CD4-positive, alpha-beta T cell (primary cell): ENCODE measurements at regions of chr2 and their contacts with region 1.

Region 1: GRCh38 chr2:100113990-100114433 is 28.4 kb downstream of the AFF3 start:
- DNase-seq: peak in 2 of 14 experiments; percentile 11 to 29
- ATAC-seq: peak; percentile 48
- H3K4me3 ChIP-seq: no peak overlapping the region
- H3K4me3 Mint-ChIP-seq: peak overlapping the region; percentile 7
- H3K27ac ChIP-seq: peak overlapping the region; percentile 22 to 66
- H3K27ac Mint-ChIP-seq: peak overlapping the region; percentile 67
- H3K4me1 ChIP-seq: peaks cover 16% of the 10 kb centered on the region
- H3K4me1 Mint-ChIP-seq: peaks cover 30% of the 10 kb centered on the region
- H3K27me3 ChIP-seq: no peaks in the 10 kb centered on the region
- H3K27me3 Mint-ChIP-seq: no peaks in the 10 kb centered on the region
- CTCF ChIP-seq: no peak

Region 2: DNA sequence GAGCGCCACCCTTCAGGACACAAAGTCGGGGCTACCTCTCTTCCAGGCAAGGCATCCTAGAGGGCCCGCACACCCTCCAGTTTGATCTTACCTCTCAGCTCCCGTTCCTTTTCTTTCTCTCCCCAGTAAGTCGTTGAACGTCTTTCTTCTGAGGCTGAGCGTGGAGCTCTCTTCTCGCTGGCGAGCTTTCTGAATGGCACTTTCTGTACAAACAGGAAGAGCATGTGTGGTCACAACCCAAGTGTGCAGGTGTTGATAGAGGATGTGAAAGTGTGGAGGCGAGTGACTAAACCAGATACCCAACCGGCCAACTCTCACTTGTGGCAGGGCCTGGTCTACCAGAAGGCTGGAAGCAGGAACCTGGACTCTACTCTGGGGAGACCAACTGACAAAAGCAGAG is 28.4 kb after region 1 on chr2 and contains the start of gene AFF3:
- CTCF ChIA-PET with region 1: no interaction called
- POLR2A ChIA-PET with region 1: interaction called, 19 read pairs
- intact Hi-C with region 1: no loop called
- DNase-seq: peak in 13 of 14 experiments; percentile 9 to 60 (median 32)
- ATAC-seq: peak; percentile 72
- H3K4me3 ChIP-seq: peak within 1 kb of the TSS; percentile 57
- H3K4me3 Mint-ChIP-seq: peak within 1 kb of the TSS; percentile 88
- H3K27ac ChIP-seq: peak within 1 kb of the TSS; percentile 28 to 34
- H3K27ac Mint-ChIP-seq: peak within 1 kb of the TSS; percentile 88
- H3K4me1 ChIP-seq: peaks cover 24% of the 10 kb centered on the region
- H3K4me1 Mint-ChIP-seq: peaks cover 64% of the 10 kb centered on the region
- H3K27me3 ChIP-seq: no peaks in the 10 kb centered on the region
- H3K27me3 Mint-ChIP-seq: no peaks in the 10 kb centered on the region
- CTCF ChIP-seq: no peak
- total RNA-seq, gene AFF3: 15.4 to 15.7 TPM